HepG2 (cell line): ENCODE measurements at regions of chr20 and their contacts with region 1.

Region 1: GRCh38 chr20:14337400-14338171 is at the start of gene FLRT3:
- DNase-seq: peak; percentile 93
- ATAC-seq: peak; percentile 99
- H3K4me3 ChIP-seq: peak within 1 kb of the TSS; percentile 33 to 65 (median 54)
- H3K27ac ChIP-seq: no peak within 1 kb of the TSS
- H3K4me1 ChIP-seq: peaks cover 17% of the 10 kb centered on the region; the same call in 1 of the 2 replicates
- H3K27me3 ChIP-seq: no peaks in the 10 kb centered on the region; a peak in 1 of 5 replicates
- CTCF ChIP-seq: peak; percentile 97
- EP300 ChIP-seq: peak; percentile 22 to 48; a peak in 2 of 4 replicates
- POLR2A ChIP-seq: peak in 1 of 2 experiments; percentile 83; a peak in 3 of 4 replicates
- RAD21 ChIP-seq: peak; percentile 86
- total RNA-seq, gene FLRT3: 0.28 and 0.44 TPM in 2 replicates

Region 2: GRCh38 chr20:14142171-14142570 is 195.4 kb before region 1 on chr20:
- CTCF ChIA-PET with region 1: no interaction called
- POLR2A ChIA-PET with region 1: no interaction called
- in situ Hi-C with region 1: no loop called
- intact Hi-C with region 1: loop called (anchors 2 kb)
- DNase-seq: peak; percentile 47
- ATAC-seq: peak; percentile 98
- H3K4me3 ChIP-seq: no peak overlapping the region
- H3K27ac ChIP-seq: no peak overlapping the region
- H3K4me1 ChIP-seq: no peaks in the 10 kb centered on the region
- H3K27me3 ChIP-seq: no peaks in the 10 kb centered on the region
- CTCF ChIP-seq: peak; percentile 82
- EP300 ChIP-seq: no peak
- POLR2A ChIP-seq: no peak
- RAD21 ChIP-seq: peak; percentile 62

Region 3: GRCh38 chr20:14757728-14758127 is 420.1 kb after region 1 on chr20:
- CTCF ChIA-PET with region 1: no interaction called
- POLR2A ChIA-PET with region 1: no interaction called
- in situ Hi-C with region 1: no loop called
- intact Hi-C with region 1: loop called (anchors 1 kb)
- DNase-seq: peak; percentile 9
- ATAC-seq: no peak
- H3K4me3 ChIP-seq: no peak overlapping the region
- H3K27ac ChIP-seq: no peak overlapping the region
- H3K4me1 ChIP-seq: no peaks in the 10 kb centered on the region
- H3K27me3 ChIP-seq: no peaks in the 10 kb centered on the region
- CTCF ChIP-seq: peak; percentile 62
- EP300 ChIP-seq: no peak
- POLR2A ChIP-seq: no peak
- RAD21 ChIP-seq: no peak

Region 4: GRCh38 chr20:14948423-14948822 is 610.8 kb after region 1 on chr20:
- CTCF ChIA-PET with region 1: no interaction called
- POLR2A ChIA-PET with region 1: no interaction called
- in situ Hi-C with region 1: loop called (anchors 10 kb)
- intact Hi-C with region 1: no loop called
- DNase-seq: peak; percentile 34
- ATAC-seq: peak; percentile 83
- H3K4me3 ChIP-seq: no peak overlapping the region
- H3K27ac ChIP-seq: no peak overlapping the region
- H3K4me1 ChIP-seq: peaks cover 8% of the 10 kb centered on the region; the same call in 1 of the 2 replicates
- H3K27me3 ChIP-seq: peaks cover 0 to 2% of the 10 kb centered on the region in 2 experiments; a peak in 1 of 5 replicates
- CTCF ChIP-seq: peak; percentile 44
- EP300 ChIP-seq: no peak
- POLR2A ChIP-seq: no peak
- RAD21 ChIP-seq: no peak

Region 5: GRCh38 chr20:14986026-14986655 is 648.6 kb after region 1 on chr20:
- CTCF ChIA-PET with region 1: no interaction called
- POLR2A ChIA-PET with region 1: interaction called, 13 read pairs
- in situ Hi-C with region 1: no loop called
- intact Hi-C with region 1: no loop called
- DNase-seq: peak; percentile 99
- ATAC-seq: peak; percentile 63
- H3K4me3 ChIP-seq: peak overlapping the region in 1 of 3 experiments; percentile 32; a peak in 1 of 6 replicates
- H3K27ac ChIP-seq: peak overlapping the region; percentile 95
- H3K4me1 ChIP-seq: peaks cover 80% of the 10 kb centered on the region
- H3K27me3 ChIP-seq: no peaks in the 10 kb centered on the region
- CTCF ChIP-seq: no peak
- EP300 ChIP-seq: peak; percentile 59 to 94; a peak in 3 of 4 replicates
- POLR2A ChIP-seq: peak in 1 of 2 experiments; percentile 22; a peak in 1 of 4 replicates
- RAD21 ChIP-seq: no peak

Region 6: DNA sequence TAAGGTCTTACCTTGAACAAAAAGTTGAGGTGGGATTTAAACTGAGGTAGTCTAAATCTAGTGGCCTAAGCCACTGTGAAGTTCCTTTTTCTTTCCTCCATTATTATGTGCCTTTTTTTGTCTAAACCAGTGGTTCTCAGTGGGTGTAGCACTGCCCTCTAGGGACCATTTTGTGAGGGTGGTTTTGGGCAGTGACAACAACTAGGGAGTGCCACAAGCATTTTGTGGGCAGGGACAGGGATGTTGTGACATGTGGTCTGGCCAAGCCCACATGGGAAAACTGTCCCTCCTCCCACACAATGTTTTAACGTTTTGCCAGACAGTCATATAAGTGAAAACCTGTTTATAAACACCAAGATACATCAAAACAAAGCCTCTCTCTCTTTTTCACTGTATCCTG is 899.2 kb after region 1 on chr20:
- CTCF ChIA-PET with region 1: interaction called, 6 read pairs
- POLR2A ChIA-PET with region 1: no interaction called
- in situ Hi-C with region 1: loop called (anchors 10 kb)
- intact Hi-C with region 1: loop called (anchors 1 kb)
- DNase-seq: peak; percentile 58
- ATAC-seq: peak; percentile 99
- H3K4me3 ChIP-seq: no peak overlapping the region
- H3K27ac ChIP-seq: no peak overlapping the region
- H3K4me1 ChIP-seq: no peaks in the 10 kb centered on the region
- H3K27me3 ChIP-seq: no peaks in the 10 kb centered on the region
- CTCF ChIP-seq: peak; percentile 89
- EP300 ChIP-seq: no peak
- POLR2A ChIP-seq: no peak
- RAD21 ChIP-seq: peak; percentile 75

Region 7: GRCh38 chr20:15654208-15654645 is 1316.6 kb after region 1 on chr20:
- CTCF ChIA-PET with region 1: no interaction called
- POLR2A ChIA-PET with region 1: no interaction called
- in situ Hi-C with region 1: no loop called
- intact Hi-C with region 1: loop called (anchors 1 kb)
- DNase-seq: peak; percentile 68
- ATAC-seq: peak; percentile 99
- H3K4me3 ChIP-seq: no peak overlapping the region
- H3K27ac ChIP-seq: no peak overlapping the region
- H3K4me1 ChIP-seq: no peaks in the 10 kb centered on the region
- H3K27me3 ChIP-seq: no peaks in the 10 kb centered on the region
- CTCF ChIP-seq: peak; percentile 74
- EP300 ChIP-seq: no peak
- POLR2A ChIP-seq: no peak
- RAD21 ChIP-seq: peak; percentile 61; the same call in 1 of the 2 replicates